MCF 10A (cell line): ENCODE measurements at regions of chr19 and their contacts with region 1.

Region 1: GRCh38 chr19:41785653-41786052 is 10.7 kb upstream of the CEACAM3 start:
- DNase-seq: peak; percentile 87
- H3K4me3 Mint-ChIP-seq: no peak overlapping the region
- H3K27ac Mint-ChIP-seq: no peak overlapping the region
- H3K4me1 Mint-ChIP-seq: peaks cover 5% of the 10 kb centered on the region
- H3K27me3 Mint-ChIP-seq: peaks cover 87% of the 10 kb centered on the region
- CTCF ChIP-seq: peak; percentile 84

Region 2: GRCh38 chr19:41706741-41707501 is 78.7 kb before region 1 on chr19:
- CTCF ChIA-PET with region 1: no interaction called
- POLR2A ChIA-PET with region 1: no interaction called
- intact Hi-C with region 1: loop called (anchors 2 kb)
- DNase-seq: peak; percentile 62
- H3K4me3 Mint-ChIP-seq: peak overlapping the region; percentile 63
- H3K27ac Mint-ChIP-seq: no peak overlapping the region
- H3K4me1 Mint-ChIP-seq: no peaks in the 10 kb centered on the region
- H3K27me3 Mint-ChIP-seq: peaks cover 93% of the 10 kb centered on the region
- CTCF ChIP-seq: peak; percentile 71

Region 3: DNA sequence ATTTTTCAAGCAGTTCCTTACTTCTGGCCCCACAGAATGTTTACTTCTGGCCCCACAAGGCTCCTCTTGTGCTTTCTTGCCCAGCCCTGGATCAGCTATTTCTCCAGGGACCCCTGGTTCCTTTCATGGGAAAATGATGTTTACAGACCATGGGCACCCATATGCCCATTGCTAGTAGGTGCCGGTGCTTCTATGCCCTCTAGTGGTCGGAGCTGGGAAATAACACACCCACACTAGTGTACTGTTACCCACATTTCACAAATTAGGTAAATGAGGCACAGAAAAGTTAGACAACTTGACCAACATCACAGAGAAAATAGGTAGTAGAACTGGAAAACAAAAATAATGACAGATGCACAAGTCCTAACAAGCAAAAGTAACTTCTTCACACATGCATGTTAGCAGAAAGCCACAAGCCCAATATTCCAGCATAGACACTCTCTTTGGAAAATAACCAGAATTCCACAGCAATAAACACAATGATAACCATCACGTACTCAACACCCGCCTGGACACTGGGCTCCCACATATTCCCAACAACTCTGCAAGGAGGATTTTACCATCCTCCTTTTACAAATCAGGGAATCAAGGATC is 31.6 kb before region 1 on chr19:
- CTCF ChIA-PET with region 1: interaction called, 35 read pairs
- POLR2A ChIA-PET with region 1: no interaction called
- intact Hi-C with region 1: loop called (anchors 1 kb)
- DNase-seq: peak; percentile 65
- H3K4me3 Mint-ChIP-seq: no peak overlapping the region
- H3K27ac Mint-ChIP-seq: no peak overlapping the region
- H3K4me1 Mint-ChIP-seq: peaks cover 5% of the 10 kb centered on the region
- H3K27me3 Mint-ChIP-seq: peaks cover 62% of the 10 kb centered on the region
- CTCF ChIP-seq: peak; percentile 76

Region 4: DNA sequence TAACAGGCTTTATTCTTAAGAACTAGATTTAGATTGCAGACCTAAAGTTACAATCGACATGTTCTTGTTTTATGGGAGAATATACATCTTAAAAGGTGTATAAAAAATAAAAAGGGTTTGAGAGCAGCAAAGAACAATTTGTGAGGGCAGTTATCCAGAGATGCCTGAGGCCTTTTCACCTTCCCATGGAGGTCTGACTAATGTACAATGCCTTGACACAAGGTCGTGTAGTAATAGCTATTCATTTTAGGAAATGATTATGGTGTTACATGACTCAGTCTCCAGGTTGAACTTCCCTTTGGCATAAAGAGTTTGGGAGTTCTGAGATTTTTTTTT is 10.3 kb before region 1 on chr19:
- CTCF ChIA-PET with region 1: interaction called, 10 read pairs
- POLR2A ChIA-PET with region 1: no interaction called
- intact Hi-C with region 1: no loop called
- DNase-seq: peak; percentile 82
- H3K4me3 Mint-ChIP-seq: no peak overlapping the region
- H3K27ac Mint-ChIP-seq: no peak overlapping the region
- H3K4me1 Mint-ChIP-seq: peaks cover 7% of the 10 kb centered on the region
- H3K27me3 Mint-ChIP-seq: peaks cover 56% of the 10 kb centered on the region
- CTCF ChIP-seq: no peak